ENCODE measurements at regions of chr6 and their contacts with region 1.

Region 1: DNA sequence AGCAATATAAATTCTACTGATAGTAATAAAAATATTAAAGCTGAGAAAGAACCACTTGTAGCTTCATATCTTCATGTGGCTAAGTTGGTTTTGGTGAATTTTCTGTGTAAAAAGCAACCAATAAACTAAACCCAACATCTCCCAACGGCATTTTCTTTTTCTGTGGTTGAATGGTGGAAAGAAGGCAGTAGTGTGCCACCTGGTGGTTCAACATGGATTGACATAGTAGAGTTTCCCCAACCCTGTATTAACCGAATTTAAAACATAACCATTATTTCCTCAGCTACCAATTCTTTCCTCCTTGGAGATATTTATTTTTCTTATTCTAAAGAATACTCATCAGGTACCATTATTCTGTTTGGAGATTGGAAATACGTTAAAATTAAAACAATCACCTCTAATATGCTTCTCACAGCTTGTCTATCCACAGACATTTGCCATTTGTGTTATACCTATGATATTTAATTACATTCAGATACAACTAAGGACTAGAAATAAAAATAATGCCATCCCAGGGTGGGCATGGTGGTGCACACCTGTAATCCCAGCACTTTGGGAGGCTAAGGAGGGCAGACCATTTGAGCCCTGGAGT is 117.1 kb upstream of the EEF1E1 start:
- DNase-seq: peak in 4 of 5 donors; percentile 19 to 39 (median 26)
- H3K4me3 ChIP-seq: no peak overlapping the region
- H3K4me3 Mint-ChIP-seq: no peak overlapping the region
- H3K27ac ChIP-seq: no peak overlapping the region
- H3K27ac Mint-ChIP-seq: no peak overlapping the region
- H3K4me1 ChIP-seq: no peaks in the 10 kb centered on the region
- H3K4me1 Mint-ChIP-seq: no peaks in the 10 kb centered on the region
- H3K27me3 ChIP-seq: no peaks in the 10 kb centered on the region
- H3K27me3 Mint-ChIP-seq: peaks cover 2 to 9% of the 10 kb centered on the region in 2 donors

Region 2: DNA sequence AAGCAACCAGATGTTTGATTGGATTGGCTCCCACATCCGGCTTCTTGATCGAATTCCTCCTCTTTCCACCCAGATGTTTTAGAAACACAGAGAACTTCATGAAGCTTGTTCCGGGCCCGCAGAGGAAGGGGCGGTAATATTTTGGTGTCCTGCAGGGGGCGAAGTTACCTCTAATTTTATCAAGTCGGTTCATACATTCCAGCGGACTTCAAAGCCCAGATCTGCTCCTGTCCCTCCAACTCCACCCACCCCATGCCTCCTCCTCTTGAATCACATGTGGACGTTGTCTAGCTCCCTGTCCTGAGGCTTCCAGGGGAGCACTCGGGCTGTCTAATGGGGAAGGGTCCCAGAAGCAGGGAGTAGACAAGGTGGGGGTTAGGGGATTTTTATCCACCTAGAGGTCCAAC is 496.4 kb before region 1 on chr6:
- CTCF ChIA-PET with region 1: interaction called, 29 read pairs
- POLR2A ChIA-PET with region 1: no interaction called
- intact Hi-C with region 1: no loop called
- DNase-seq: peak; percentile 27 to 52 (median 37)
- H3K4me3 ChIP-seq: no peak overlapping the region
- H3K4me3 Mint-ChIP-seq: no peak overlapping the region
- H3K27ac ChIP-seq: no peak overlapping the region
- H3K27ac Mint-ChIP-seq: no peak overlapping the region
- H3K4me1 ChIP-seq: peaks cover 12% of the 10 kb centered on the region
- H3K4me1 Mint-ChIP-seq: peaks cover 1 to 13% (median 11%) of the 10 kb centered on the region in 4 donors
- H3K27me3 ChIP-seq: peaks cover 20% of the 10 kb centered on the region
- H3K27me3 Mint-ChIP-seq: peaks cover 34 to 51% of the 10 kb centered on the region in 2 donors

Region 3: DNA sequence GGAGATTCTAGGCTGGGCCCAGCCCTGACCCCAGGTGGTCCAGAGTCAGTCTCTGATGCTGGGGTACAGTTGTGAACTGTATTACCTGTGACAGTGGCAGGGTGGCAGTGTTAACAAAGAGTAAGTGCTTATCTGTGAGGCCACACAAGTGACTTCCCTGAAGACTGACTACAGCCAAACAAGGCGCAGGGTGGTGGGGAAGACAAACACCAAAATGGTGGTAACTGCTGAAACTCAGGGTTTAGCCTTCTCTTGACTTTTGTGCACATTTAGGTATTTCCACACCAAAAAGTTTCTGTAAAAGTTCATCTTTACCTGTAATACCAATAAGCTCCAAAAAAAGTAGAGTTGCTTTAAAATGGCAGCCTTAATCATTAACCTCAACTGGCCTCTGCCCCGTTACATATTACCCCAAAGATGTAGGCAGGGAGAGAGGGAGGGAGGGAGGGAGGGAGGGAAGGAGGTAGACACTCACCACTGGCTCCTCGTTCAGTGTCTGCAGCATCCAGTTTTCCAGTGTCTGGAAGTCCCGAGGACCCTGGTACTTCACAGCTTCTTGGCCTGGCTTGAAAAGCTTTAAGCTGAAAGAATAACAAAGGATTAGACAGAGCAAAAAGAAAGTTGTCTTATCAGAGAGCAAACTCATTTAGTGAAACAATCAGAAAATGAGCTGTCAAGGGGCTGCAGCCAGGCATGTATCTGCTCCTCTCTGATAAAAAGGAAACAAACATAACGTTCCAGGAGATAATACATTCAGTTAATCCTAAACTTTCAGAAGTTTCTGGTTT is 320.2 kb before region 1 on chr6:
- CTCF ChIA-PET with region 1: interaction called, 17 read pairs
- POLR2A ChIA-PET with region 1: no interaction called
- intact Hi-C with region 1: no loop called
- DNase-seq: no peak
- H3K4me3 ChIP-seq: no peak overlapping the region
- H3K4me3 Mint-ChIP-seq: no peak overlapping the region
- H3K27ac ChIP-seq: no peak overlapping the region
- H3K27ac Mint-ChIP-seq: no peak overlapping the region
- H3K4me1 ChIP-seq: no peaks in the 10 kb centered on the region
- H3K4me1 Mint-ChIP-seq: peaks cover 0 to 1% (median 0%) of the 10 kb centered on the region in 4 donors
- H3K27me3 ChIP-seq: no peaks in the 10 kb centered on the region
- H3K27me3 Mint-ChIP-seq: no peaks in the 10 kb centered on the region

Region 4: DNA sequence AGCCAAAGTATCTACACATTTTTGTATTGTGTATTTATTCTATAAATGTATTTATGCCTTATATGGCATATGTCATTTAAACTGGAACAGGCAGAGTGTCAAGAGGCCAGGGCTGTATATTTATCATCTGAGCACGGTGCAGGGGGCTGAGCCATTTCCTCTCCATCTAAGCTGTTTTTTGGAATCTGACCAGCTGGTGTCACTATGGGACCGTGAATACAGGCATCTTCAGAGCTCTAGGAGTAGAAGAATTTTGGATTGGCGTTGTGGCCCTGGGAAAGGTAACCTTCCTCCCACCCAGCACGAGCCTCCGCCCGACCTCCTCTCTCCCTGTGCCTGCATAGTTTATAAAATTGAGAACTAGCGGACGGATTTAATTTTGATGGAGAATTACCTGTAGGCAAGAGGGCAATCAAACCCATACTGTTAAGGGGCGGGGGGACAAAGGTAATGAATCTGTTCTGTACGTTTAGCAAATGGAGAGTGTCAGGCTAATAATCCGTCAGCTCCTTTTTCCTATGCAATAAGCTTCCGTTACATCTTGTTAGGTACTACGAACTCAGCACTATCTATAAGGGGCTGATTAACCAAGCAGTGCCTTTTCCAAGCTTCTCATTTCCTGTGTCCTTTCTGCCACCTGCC is 88.1 kb before region 1 on chr6:
- CTCF ChIA-PET with region 1: interaction called, 41 read pairs
- POLR2A ChIA-PET with region 1: no interaction called
- intact Hi-C with region 1: loop called (anchors 1 kb)
- DNase-seq: peak in 4 of 5 donors; percentile 10 to 19 (median 14)
- H3K4me3 ChIP-seq: no peak overlapping the region
- H3K4me3 Mint-ChIP-seq: no peak overlapping the region
- H3K27ac ChIP-seq: no peak overlapping the region
- H3K27ac Mint-ChIP-seq: no peak overlapping the region
- H3K4me1 ChIP-seq: no peaks in the 10 kb centered on the region
- H3K4me1 Mint-ChIP-seq: peaks cover 0 to 4% (median 0%) of the 10 kb centered on the region in 4 donors
- H3K27me3 ChIP-seq: no peaks in the 10 kb centered on the region
- H3K27me3 Mint-ChIP-seq: peaks cover 16 to 27% of the 10 kb centered on the region in 2 donors

Region 5: GRCh38 chr6:8229915-8230756 is 10.7 kb after region 1 on chr6:
- CTCF ChIA-PET with region 1: interaction called, 25 read pairs
- POLR2A ChIA-PET with region 1: no interaction called
- intact Hi-C with region 1: no loop called
- DNase-seq: no peak
- H3K4me3 ChIP-seq: no peak overlapping the region
- H3K4me3 Mint-ChIP-seq: no peak overlapping the region
- H3K27ac ChIP-seq: no peak overlapping the region
- H3K27ac Mint-ChIP-seq: no peak overlapping the region
- H3K4me1 ChIP-seq: no peaks in the 10 kb centered on the region
- H3K4me1 Mint-ChIP-seq: no peaks in the 10 kb centered on the region
- H3K27me3 ChIP-seq: no peaks in the 10 kb centered on the region
- H3K27me3 Mint-ChIP-seq: peaks cover 3 to 13% of the 10 kb centered on the region in 2 donors